Kidney (tissue), 22 donors: ENCODE measurements at regions of chr17 and their contacts with region 1.

Region 1: GRCh38 chr17:66727639-66728570 is 107.0 kb upstream of the CACNG5 start:
- DNase-seq: peak in 4 of 5 donors; percentile 79 to 85 (median 82)
- H3K4me3 ChIP-seq: no peak overlapping the region
- H3K27ac ChIP-seq: no peak overlapping the region
- H3K4me1 ChIP-seq: peaks cover 0 to 4% (median 3%) of the 10 kb centered on the region in 3 donors
- H3K27me3 ChIP-seq: no peaks in the 10 kb centered on the region
- CTCF ChIP-seq: peak; percentile 67

Region 2: DNA sequence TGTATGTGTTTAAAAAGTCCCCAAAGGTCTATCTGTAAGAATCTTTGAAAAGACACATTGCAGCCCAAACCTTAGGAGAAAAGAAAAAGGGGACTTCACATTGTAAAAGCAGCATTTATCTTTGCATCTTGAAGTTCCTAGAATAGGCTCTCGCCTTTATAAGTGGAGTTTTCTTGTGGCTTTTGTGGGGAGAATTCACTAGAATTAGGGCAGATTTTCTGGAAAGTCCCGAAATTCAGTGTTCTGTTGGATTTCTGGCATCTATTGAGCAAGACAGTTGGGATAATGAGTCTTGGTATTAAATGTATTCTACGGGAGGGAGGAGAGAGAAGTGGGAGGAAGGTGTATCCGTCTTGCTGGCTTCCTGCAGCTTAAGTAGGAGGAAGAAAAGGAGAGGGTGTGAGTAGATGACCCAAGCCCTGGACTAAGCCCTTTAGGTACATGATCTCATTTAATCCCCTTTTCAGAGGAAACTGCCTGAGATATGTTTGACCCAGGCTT is 362.9 kb before region 1 on chr17:
- intact Hi-C with region 1: no loop called
- DNase-seq: no peak
- H3K4me3 ChIP-seq: no peak overlapping the region
- H3K27ac ChIP-seq: no peak overlapping the region
- H3K4me1 ChIP-seq: peaks cover 0 to 4% (median 3%) of the 10 kb centered on the region in 3 donors
- H3K27me3 ChIP-seq: no peaks in the 10 kb centered on the region
- CTCF ChIP-seq: no peak

Region 3: GRCh38 chr17:66673668-66674315 is 54.1 kb before region 1 on chr17:
- intact Hi-C with region 1: no loop called
- DNase-seq: peak in 3 of 5 donors; percentile 58 to 79 (median 75)
- H3K4me3 ChIP-seq: no peak overlapping the region
- H3K27ac ChIP-seq: no peak overlapping the region
- H3K4me1 ChIP-seq: peaks cover 0 to 9% (median 4%) of the 10 kb centered on the region in 3 donors
- H3K27me3 ChIP-seq: no peaks in the 10 kb centered on the region
- CTCF ChIP-seq: peak; percentile 74

Region 4: DNA sequence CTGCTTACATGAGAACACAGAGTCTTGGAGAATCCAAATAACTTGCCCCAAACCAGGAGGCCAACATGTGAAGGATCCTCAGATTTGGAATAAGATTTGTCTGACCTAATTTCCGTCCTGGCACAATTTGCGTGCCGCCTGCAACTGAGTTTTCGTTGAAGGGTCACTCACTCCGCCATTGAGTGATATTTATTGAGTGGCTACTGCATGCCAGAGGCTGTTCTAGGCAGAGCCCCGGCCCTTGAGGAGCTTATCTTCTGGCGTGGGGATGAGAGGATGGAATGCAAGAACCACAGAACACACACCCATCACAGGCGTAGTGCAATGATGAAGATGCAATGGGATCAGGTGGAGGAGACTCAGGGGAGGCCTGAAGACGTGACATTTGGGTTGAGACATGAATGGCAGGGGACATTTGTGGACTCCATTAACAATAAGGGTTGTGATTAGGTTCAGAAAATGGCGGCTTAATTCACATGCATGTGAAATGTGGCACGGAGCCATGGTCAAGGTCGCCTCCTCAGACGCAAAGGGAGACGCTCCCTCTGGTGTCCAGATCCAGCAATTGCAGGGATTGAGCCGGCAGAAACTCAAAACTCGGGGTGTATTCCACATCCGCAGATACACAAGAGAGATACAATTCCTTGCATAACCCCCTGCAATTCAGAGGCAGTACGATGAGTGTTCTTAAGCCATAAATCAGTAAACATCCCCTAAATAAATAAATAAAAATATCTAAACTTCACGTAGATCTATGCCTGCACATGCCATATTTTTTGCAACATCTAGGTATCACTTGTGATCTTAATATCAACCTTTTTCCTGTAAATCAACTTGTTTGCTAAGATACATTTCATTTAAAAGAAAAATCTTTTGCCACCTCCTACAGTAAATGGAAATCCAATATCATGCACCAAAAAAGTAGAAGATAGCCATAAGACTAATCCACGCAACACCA is 178.7 kb after region 1 on chr17:
- intact Hi-C with region 1: loop called (anchors 5 kb)
- DNase-seq: peak; percentile 82 to 93 (median 86)
- H3K4me3 ChIP-seq: no peak overlapping the region
- H3K27ac ChIP-seq: no peak overlapping the region
- H3K4me1 ChIP-seq: peaks cover 0 to 3% (median 0%) of the 10 kb centered on the region in 3 donors
- H3K27me3 ChIP-seq: no peaks in the 10 kb centered on the region
- CTCF ChIP-seq: peak; percentile 87